ENCODE measurements at regions of chr6 and their contacts with region 1.

Region 1: GRCh38 chr6:86856937-86857563 is 80.3 kb upstream of the HTR1E start:
- DNase-seq: peak; percentile 30
- H3K4me3 ChIP-seq: no peak overlapping the region
- H3K27ac ChIP-seq: no peak overlapping the region
- H3K4me1 ChIP-seq: no peaks in the 10 kb centered on the region
- H3K27me3 ChIP-seq: no peaks in the 10 kb centered on the region
- CTCF ChIP-seq: peak; percentile 62

Region 2: DNA sequence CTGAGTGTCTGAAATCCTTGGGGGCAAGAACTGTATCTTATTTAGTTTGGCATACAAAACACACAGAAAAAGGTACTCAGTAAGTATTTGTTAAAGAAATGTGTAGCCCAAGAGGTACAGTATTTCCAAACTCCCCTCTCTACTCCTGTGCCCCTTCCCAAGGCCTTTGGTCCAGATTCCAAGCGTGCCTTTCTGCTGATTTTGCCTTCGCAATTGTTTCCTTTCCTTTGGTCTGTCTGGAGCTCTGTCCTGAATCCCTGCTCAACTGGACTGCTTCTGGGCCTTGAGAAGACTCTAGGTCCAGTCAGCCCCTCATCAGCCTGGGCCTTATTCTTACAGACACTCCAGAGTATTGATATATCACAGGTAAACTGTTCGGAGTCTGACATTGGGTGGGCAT is 1092.2 kb before region 1 on chr6:
- intact Hi-C with region 1: loop called (anchors 5 kb)
- DNase-seq: no peak
- H3K4me3 ChIP-seq: no peak overlapping the region
- H3K27ac ChIP-seq: no peak overlapping the region
- H3K4me1 ChIP-seq: no peaks in the 10 kb centered on the region
- H3K27me3 ChIP-seq: no peaks in the 10 kb centered on the region
- CTCF ChIP-seq: no peak

Region 3: DNA sequence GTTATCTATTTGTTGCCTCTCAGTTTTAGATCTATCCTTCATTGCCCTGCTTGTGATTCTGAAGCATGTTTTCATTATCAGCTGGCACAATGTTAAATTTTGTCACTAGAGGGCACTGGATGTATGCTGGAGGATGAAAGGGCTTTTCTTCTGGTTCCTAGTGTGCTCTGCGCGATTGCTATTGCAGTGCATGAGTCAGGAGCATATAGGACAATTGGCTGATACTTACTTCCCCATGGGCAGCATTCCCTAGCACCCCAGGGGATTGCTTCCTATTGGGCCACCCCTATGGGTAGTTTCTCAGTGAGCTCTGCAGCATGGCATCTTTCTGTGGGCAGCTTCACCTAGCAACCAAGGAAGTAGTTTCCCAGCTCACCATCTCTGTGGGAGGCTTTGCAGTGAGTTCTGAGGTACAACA is 934.0 kb before region 1 on chr6:
- intact Hi-C with region 1: loop called (anchors 5 kb)
- DNase-seq: peak; percentile 19
- H3K4me3 ChIP-seq: no peak overlapping the region
- H3K27ac ChIP-seq: no peak overlapping the region
- H3K4me1 ChIP-seq: no peaks in the 10 kb centered on the region
- H3K27me3 ChIP-seq: no peaks in the 10 kb centered on the region
- CTCF ChIP-seq: peak; percentile 35